Activated CD4-positive, alpha-beta memory T cell treated with anti-CD3 and anti-CD28 coated beads, Interleukin-2, amount 10 ng/mL, durations not matched to agents 7 days and 5 days (primary cell): ENCODE measurements at regions of chr2 and their contacts with region 1.

Region 1: GRCh38 chr2:148552675-148553331 is 91.7 kb upstream of the EPC2 start:
- DNase-seq: peak; percentile 45
- H3K4me3 Mint-ChIP-seq: no peak overlapping the region
- H3K27ac Mint-ChIP-seq: no peak overlapping the region
- H3K4me1 Mint-ChIP-seq: peaks cover 1% of the 10 kb centered on the region
- H3K27me3 Mint-ChIP-seq: no peaks in the 10 kb centered on the region

Region 2: GRCh38 chr2:148524519-148524919 is 28.3 kb before region 1 on chr2:
- CTCF ChIA-PET with region 1: interaction called, 7 read pairs
- POLR2A ChIA-PET with region 1: interaction called, 12 read pairs
- DNase-seq: peak; percentile 65
- H3K4me3 Mint-ChIP-seq: no peak overlapping the region
- H3K27ac Mint-ChIP-seq: peak overlapping the region; percentile 29
- H3K4me1 Mint-ChIP-seq: peaks cover 59% of the 10 kb centered on the region
- H3K27me3 Mint-ChIP-seq: no peaks in the 10 kb centered on the region

Region 3: GRCh38 chr2:148540022-148540421 is 12.8 kb before region 1 on chr2:
- CTCF ChIA-PET with region 1: interaction called, 8 read pairs
- POLR2A ChIA-PET with region 1: interaction called, 15 read pairs
- DNase-seq: no peak
- H3K4me3 Mint-ChIP-seq: no peak overlapping the region
- H3K27ac Mint-ChIP-seq: no peak overlapping the region
- H3K4me1 Mint-ChIP-seq: peaks cover 16% of the 10 kb centered on the region
- H3K27me3 Mint-ChIP-seq: no peaks in the 10 kb centered on the region